Dendritic cell treated with granulocyte-macrophage colony-stimulating factor and Interleukin-4, amounts not matched to agents 40 ng/mL and 50 ng/mL, for 4 days (primary cell): ENCODE measurements at regions of chr19 and their contacts with region 1.

Region 1: DNA sequence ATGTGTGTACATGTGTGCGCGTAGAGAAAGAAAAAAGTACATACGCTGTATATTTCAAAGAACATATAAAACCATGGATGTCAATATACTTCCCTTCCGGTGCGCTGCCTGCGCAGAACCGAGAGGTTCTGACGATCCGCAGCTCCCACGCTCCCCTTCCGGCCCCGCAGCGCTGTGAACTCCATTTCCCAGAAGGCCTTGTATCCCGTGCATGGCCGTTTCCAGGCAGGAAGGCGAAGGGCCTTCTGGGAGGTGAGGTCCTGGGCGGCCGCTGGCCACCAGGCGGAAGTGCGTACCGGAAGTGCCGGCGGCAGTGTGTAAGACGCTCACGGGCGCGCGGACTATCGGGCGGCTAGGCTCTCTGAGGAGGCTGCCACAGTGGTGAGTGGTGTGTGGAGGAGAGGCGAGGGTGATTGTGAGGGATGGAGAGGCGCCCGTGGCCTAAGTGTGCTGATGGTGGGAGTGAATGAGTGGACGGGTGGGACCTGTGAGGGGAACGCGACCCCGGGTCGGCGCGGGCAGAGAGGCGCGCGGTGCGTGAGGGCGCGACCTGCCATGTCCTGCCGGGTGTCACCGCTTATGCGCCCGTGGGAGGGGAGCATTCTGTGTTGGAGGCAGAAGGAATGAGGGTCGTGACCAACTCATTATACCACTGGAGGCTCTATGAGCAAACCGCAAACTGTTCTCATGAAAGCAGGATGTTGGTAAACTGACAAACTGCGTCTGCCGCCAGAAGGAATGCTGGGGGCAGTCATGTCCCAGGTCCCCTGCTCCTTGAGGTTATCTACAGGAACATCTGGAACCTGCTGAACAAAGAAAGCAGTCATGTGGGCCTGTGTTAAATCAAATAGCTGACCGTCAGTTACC is at the start of gene ERVK3-1:
- H3K4me3 Mint-ChIP-seq: peak within 1 kb of the TSS; percentile 95
- H3K27ac Mint-ChIP-seq: peak within 1 kb of the TSS; percentile 97
- H3K4me1 Mint-ChIP-seq: peaks cover 14% of the 10 kb centered on the region
- H3K27me3 Mint-ChIP-seq: no peaks in the 10 kb centered on the region

Region 2: GRCh38 chr19:58182989-58183816 is 122.1 kb before region 1 on chr19 and contains the start of gene ZNF274:
- intact Hi-C with region 1: loop called (anchors 1 kb)
- H3K4me3 Mint-ChIP-seq: peak within 1 kb of the TSS; percentile 93
- H3K27ac Mint-ChIP-seq: peak within 1 kb of the TSS; percentile 100
- H3K4me1 Mint-ChIP-seq: peaks cover 22% of the 10 kb centered on the region
- H3K27me3 Mint-ChIP-seq: no peaks in the 10 kb centered on the region

Region 3: GRCh38 chr19:58228585-58229254 is 76.6 kb before region 1 on chr19 and contains the start of gene ZNF544:
- intact Hi-C with region 1: no loop called
- H3K4me3 Mint-ChIP-seq: peak within 1 kb of the TSS; percentile 95
- H3K27ac Mint-ChIP-seq: peak within 1 kb of the TSS; percentile 88
- H3K4me1 Mint-ChIP-seq: peaks cover 30% of the 10 kb centered on the region
- H3K27me3 Mint-ChIP-seq: no peaks in the 10 kb centered on the region

Region 4: GRCh38 chr19:58278157-58279041 is 26.9 kb before region 1 on chr19 and contains the start of gene ZNF8:
- intact Hi-C with region 1: loop called (anchors 1 kb)
- H3K4me3 Mint-ChIP-seq: peak within 1 kb of the TSS; percentile 90
- H3K27ac Mint-ChIP-seq: peak within 1 kb of the TSS; percentile 96
- H3K4me1 Mint-ChIP-seq: peaks cover 22% of the 10 kb centered on the region
- H3K27me3 Mint-ChIP-seq: no peaks in the 10 kb centered on the region

Region 5: GRCh38 chr19:58315580-58315979 is 10.3 kb after region 1 on chr19:
- intact Hi-C with region 1: no loop called
- H3K4me3 Mint-ChIP-seq: no peak overlapping the region
- H3K27ac Mint-ChIP-seq: no peak overlapping the region
- H3K4me1 Mint-ChIP-seq: no peaks in the 10 kb centered on the region
- H3K27me3 Mint-ChIP-seq: no peaks in the 10 kb centered on the region

Region 6: GRCh38 chr19:58326914-58327726 is 21.8 kb after region 1 on chr19 and contains the start of gene ZSCAN22:
- intact Hi-C with region 1: loop called (anchors 1 kb)
- H3K4me3 Mint-ChIP-seq: no peak within 1 kb of the TSS
- H3K27ac Mint-ChIP-seq: no peak within 1 kb of the TSS
- H3K4me1 Mint-ChIP-seq: peaks cover 8% of the 10 kb centered on the region
- H3K27me3 Mint-ChIP-seq: no peaks in the 10 kb centered on the region

Region 7: DNA sequence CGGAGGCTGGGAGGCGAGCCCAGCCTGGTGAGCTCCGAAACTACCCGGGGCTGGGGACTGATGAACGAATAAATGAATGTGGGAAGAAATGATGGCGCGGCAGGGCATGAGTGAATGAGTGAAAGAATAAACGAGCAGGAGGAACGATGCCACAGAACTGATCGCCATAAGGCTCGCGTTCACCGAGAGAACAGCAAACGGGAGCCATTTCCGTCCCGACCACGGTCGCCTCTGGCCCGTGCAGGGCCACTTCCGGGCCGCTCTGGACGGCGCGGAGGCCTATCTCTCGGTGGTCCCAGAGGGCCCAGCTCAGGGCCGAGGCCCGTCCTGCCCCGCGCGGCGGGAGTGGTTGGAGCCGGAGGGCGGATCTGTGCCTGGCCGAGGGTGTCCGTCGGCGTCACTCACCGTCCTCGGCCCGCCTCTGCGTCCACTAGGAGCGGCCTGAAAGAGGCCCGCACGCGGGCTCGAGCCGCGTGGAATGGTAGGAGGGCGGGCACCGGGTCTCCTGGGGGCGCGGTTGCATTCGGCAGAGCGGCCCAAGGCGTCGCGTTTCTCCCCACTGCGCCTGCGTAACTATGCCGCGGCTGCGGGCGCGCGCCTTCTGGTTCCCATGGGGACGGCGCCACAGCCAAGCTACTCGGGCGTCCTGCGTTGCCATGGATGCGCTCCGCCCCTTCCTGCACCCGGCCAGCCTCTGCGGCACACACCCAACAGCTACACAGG is 57.1 kb after region 1 on chr19 and contains the start of gene ZNF497:
- intact Hi-C with region 1: loop called (anchors 2 kb)
- H3K4me3 Mint-ChIP-seq: peak within 1 kb of the TSS; percentile 96
- H3K27ac Mint-ChIP-seq: peak within 1 kb of the TSS; percentile 98
- H3K4me1 Mint-ChIP-seq: peaks cover 24% of the 10 kb centered on the region
- H3K27me3 Mint-ChIP-seq: peaks cover 12% of the 10 kb centered on the region

Region 8: GRCh38 chr19:58386576-58387337 is 81.5 kb after region 1 on chr19 and contains the start of gene RPS5:
- intact Hi-C with region 1: loop called (anchors 1 kb)
- H3K4me3 Mint-ChIP-seq: peak within 1 kb of the TSS; percentile 96
- H3K27ac Mint-ChIP-seq: peak within 1 kb of the TSS; percentile 96
- H3K4me1 Mint-ChIP-seq: peaks cover 43% of the 10 kb centered on the region
- H3K27me3 Mint-ChIP-seq: no peaks in the 10 kb centered on the region